Esophagus muscularis mucosa (tissue), 4 donors: ENCODE measurements at regions of chr10 and their contacts with region 1.

Region 1: DNA sequence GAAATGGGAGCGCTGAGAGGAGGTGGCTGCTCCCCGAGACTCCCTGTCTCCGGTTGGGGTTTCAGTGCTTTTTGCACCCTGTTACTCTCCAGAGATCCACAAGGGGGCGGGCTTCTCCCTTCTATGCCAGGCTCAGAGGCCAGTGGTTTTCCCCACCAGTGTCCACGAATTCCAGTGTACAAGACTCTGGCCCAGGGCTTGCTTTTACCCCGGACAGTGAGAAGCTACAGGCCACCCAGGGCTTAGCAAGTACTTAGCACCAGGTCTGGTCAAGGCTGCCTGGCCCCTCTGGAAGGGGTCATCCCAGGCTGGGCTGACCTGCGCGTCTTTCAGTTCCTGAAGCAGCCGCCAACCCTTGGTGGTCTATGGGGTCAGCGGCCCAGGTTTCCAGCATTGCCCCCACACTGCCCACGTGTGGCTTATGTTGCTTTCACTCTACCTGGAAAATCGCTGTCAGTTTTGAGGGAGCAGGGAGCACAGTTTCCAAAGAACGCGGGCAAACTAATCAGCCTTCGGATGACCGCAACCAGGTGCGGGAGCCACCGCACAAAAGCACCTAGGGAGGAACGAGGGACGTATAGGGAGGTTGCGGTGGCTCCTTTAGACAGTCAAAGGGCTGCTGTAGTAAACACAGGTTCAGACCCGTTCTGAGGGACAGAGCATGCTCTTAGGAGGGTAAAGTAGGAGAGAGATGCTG is 6.8 kb downstream of the CYP26A1 start:
- DNase-seq: peak; percentile 92
- H3K4me3 ChIP-seq: no peak overlapping the region
- H3K27ac ChIP-seq: no peak overlapping the region
- H3K4me1 ChIP-seq: peaks cover 0 to 8% (median 5%) of the 10 kb centered on the region in 4 donors
- H3K27me3 ChIP-seq: peaks cover 0 to 42% (median 0%) of the 10 kb centered on the region in 4 donors
- CTCF ChIP-seq: peak; percentile 71 to 86 (median 78)
- EP300 ChIP-seq: no peak
- POLR2A ChIP-seq: no peak

Region 2: GRCh38 chr10:93288654-93289634 is 208.4 kb after region 1 on chr10:
- intact Hi-C with region 1: loop called (anchors 2 kb)
- DNase-seq: no peak
- H3K4me3 ChIP-seq: no peak overlapping the region
- H3K27ac ChIP-seq: no peak overlapping the region
- H3K4me1 ChIP-seq: peaks cover 0 to 6% (median 5%) of the 10 kb centered on the region in 4 donors
- H3K27me3 ChIP-seq: no peaks in the 10 kb centered on the region
- CTCF ChIP-seq: peak; percentile 78 to 86 (median 79)
- EP300 ChIP-seq: no peak
- POLR2A ChIP-seq: no peak

Region 3: GRCh38 chr10:93352638-93353383 is 272.3 kb after region 1 on chr10:
- intact Hi-C with region 1: loop called (anchors 10 kb)
- DNase-seq: peak; percentile 17
- H3K4me3 ChIP-seq: no peak overlapping the region
- H3K27ac ChIP-seq: no peak overlapping the region
- H3K4me1 ChIP-seq: no peaks in the 10 kb centered on the region
- H3K27me3 ChIP-seq: no peaks in the 10 kb centered on the region
- CTCF ChIP-seq: peak; percentile 56 to 74 (median 64)
- EP300 ChIP-seq: no peak
- POLR2A ChIP-seq: no peak